Activated CD8-positive, alpha-beta T cell treated with anti-CD3 and anti-CD28 coated beads for 36 hours (primary cell): ENCODE measurements at regions of chr6 and their contacts with region 1.

Region 1: GRCh38 chr6:42928986-42929820 is at the start of gene CNPY3:
- DNase-seq: peak; percentile 98
- ATAC-seq: peak; percentile 82
- H3K4me3 Mint-ChIP-seq: peak within 1 kb of the TSS; percentile 95
- H3K27ac Mint-ChIP-seq: peak within 1 kb of the TSS; percentile 97
- H3K4me1 Mint-ChIP-seq: peaks cover 32% of the 10 kb centered on the region
- H3K27me3 Mint-ChIP-seq: no peaks in the 10 kb centered on the region
- CTCF ChIP-seq: no peak
- total RNA-seq, gene CNPY3: 46.2 to 46.8 TPM

Region 2: DNA sequence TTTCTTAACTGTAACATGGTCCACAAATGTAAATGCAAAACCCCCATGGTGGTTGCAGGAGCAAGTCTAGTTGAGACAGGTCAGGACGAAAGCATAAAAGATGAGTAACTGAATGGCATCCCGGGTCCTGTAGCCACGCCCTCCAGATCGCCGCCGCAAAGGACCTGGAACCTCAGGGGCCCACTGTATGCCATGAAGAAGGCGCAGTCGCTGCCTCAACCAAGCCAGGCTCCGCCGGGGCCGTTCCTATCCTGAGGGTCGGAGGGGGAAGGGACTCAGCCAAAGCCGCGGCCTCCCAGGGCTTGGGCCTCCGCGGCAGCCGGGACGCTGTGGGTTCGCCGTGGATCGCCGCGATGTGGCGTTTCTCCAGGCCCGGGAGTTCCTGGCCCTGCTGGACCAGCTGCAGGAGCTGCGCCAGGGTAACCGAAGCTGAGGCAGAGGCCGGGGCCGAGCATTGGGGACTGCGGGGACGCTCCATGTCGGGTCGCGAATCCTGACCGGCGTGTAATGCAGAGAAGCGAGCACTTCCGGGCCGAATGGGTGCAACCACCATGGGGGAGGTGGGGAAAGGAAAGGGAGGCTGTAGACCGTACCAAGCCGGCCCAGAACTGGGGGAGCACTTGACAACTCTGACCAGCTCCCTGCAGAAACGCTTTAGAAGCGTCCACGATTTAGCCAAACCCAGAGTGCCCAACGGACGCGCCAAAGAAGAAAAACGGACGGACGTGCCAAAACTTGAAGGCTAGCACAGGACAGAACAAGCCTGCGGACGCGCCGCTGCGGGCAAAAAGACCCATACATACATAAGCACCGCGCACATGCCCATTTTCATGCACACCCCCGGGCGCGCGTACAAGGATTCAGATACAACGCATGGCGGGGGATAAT is 38.6 kb before region 1 on chr6:
- CTCF ChIA-PET with region 1: interaction called, 3 read pairs
- POLR2A ChIA-PET with region 1: interaction called, 10 read pairs
- intact Hi-C with region 1: no loop called
- DNase-seq: peak; percentile 96
- ATAC-seq: peak; percentile 93
- H3K4me3 Mint-ChIP-seq: peak overlapping the region; percentile 79
- H3K27ac Mint-ChIP-seq: peak overlapping the region; percentile 92
- H3K4me1 Mint-ChIP-seq: peaks cover 28% of the 10 kb centered on the region
- H3K27me3 Mint-ChIP-seq: no peaks in the 10 kb centered on the region
- CTCF ChIP-seq: no peak

Region 3: GRCh38 chr6:42901536-42901957 is 27.7 kb before region 1 on chr6:
- CTCF ChIA-PET with region 1: interaction called, 16 read pairs
- POLR2A ChIA-PET with region 1: interaction called, 4 read pairs
- intact Hi-C with region 1: no loop called
- DNase-seq: peak; percentile 79
- ATAC-seq: peak; percentile 100
- H3K4me3 Mint-ChIP-seq: peak overlapping the region; percentile 41
- H3K27ac Mint-ChIP-seq: peak overlapping the region; percentile 13
- H3K4me1 Mint-ChIP-seq: peaks cover 14% of the 10 kb centered on the region
- H3K27me3 Mint-ChIP-seq: no peaks in the 10 kb centered on the region
- CTCF ChIP-seq: peak; percentile 86

Region 4: DNA sequence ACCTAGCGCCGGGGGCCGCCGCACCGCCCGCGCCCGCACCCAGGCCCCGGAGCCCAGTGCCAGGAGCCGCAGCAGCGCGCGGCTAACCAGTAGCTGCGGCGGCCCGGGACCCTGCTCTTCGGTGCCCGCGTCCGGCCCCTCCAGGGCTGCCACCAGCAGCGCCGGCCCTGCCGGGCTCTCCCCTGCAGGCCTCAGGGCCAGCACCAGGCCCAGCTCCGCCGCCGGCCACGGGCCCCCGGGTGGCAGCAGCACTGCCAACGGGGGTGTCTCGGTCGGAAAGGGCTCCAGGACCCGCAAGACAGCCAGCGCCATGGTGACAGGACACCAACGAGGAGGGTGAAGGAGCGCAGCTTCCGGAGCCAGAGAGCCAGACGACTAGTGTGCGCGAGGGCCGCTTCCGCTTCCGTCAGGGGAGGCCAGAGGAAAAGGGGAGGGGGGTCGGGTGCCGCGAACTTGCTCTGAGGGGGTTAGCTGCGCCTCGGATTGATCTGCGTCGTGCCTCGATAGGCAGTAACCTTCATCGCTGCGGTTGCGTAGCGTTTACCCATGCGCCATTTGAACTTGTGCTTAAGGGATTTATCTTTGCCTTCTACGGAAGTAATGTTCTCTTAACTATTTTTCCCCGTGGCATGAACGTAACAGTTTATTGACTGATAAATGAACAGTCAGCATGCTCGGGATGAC is 49.8 kb after region 1 on chr6 and contains the start of gene PEX6:
- CTCF ChIA-PET with region 1: interaction called, 10 read pairs
- POLR2A ChIA-PET with region 1: interaction called, 38 read pairs
- intact Hi-C with region 1: loop called (anchors 1 kb)
- DNase-seq: peak; percentile 94
- ATAC-seq: peak; percentile 92
- H3K4me3 Mint-ChIP-seq: peak within 1 kb of the TSS; percentile 88
- H3K27ac Mint-ChIP-seq: peak within 1 kb of the TSS; percentile 95
- H3K4me1 Mint-ChIP-seq: peaks cover 45% of the 10 kb centered on the region
- H3K27me3 Mint-ChIP-seq: no peaks in the 10 kb centered on the region
- CTCF ChIP-seq: no peak
- total RNA-seq, gene PEX6: 7.3 to 9.0 TPM

Region 5: DNA sequence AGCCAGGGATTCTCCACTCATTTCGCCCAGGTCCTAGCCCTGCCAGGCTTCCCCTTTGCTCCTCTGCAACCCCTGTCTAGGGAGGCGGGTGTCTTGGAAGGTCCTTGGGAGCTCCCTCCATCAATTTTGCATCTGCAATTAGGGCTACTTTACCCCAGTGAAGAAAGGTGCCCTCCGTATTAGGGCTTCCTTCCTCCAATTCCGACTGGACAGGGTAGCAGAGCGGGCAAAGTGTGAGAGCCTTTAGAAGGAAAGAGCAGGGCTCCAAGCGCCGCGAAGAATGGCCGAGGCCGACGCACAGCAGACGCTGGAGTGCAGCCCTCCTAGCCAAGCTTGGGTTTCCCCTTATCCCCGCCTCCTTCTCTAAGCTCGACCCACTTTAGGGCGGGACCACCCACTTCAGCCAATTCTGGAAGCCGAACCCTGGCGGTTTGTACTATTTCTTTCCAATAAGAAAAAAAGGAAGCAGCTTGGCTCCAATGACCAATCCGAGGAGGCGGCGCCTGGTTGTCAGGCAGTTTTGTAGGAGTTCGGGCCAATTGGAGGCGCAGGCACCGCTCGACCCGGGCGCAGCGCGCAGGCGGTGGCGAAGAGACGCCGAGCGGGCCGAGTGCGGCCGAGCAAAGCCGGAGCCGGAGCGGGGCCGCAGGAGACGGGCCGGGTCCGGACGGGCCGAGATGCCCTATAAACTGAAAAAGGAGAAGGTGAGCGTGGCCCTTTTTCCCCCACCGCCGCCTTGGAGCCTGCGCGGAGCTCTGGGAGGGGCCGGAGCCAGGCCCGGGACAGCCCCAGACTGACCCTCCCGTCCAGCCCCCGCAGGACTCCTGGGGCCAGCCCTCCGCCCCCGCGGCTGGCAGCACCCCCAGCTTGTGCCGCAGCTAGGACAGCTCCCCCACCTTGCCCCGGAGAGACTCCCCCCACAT is 55.1 kb after region 1 on chr6 and contains the start of gene PPP2R5D:
- CTCF ChIA-PET with region 1: interaction called, 10 read pairs
- POLR2A ChIA-PET with region 1: interaction called, 38 read pairs
- intact Hi-C with region 1: loop called (anchors 1 kb)
- DNase-seq: peak; percentile 99
- ATAC-seq: peak; percentile 94
- H3K4me3 Mint-ChIP-seq: peak within 1 kb of the TSS; percentile 88
- H3K27ac Mint-ChIP-seq: peak within 1 kb of the TSS; percentile 84
- H3K4me1 Mint-ChIP-seq: peaks cover 55% of the 10 kb centered on the region
- H3K27me3 Mint-ChIP-seq: no peaks in the 10 kb centered on the region
- CTCF ChIP-seq: no peak
- total RNA-seq, gene PPP2R5D: 41.6 to 47.5 TPM

Region 6: DNA sequence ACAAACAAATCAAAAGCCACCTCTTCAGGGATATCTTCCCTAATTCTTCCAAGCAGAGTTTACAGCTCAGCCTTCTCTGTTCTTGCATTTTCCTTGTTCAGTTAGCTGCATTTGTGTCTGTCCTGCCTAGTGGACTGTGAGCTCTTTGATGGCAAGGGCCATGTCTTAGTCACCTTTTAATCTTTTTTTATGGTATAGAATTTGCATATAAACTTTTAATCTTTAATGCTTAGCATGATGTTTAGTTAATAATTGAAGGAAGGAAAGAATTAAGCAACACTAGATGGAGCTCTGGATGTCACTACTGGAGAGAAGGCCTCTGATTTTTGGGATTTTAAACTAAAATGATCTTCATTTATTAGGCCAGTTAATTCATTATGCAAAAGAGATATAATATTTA is 67.3 kb after region 1 on chr6:
- CTCF ChIA-PET with region 1: no interaction called
- POLR2A ChIA-PET with region 1: no interaction called
- intact Hi-C with region 1: no loop called
- DNase-seq: no peak
- ATAC-seq: no peak
- H3K4me3 Mint-ChIP-seq: no peak overlapping the region
- H3K27ac Mint-ChIP-seq: no peak overlapping the region
- H3K4me1 Mint-ChIP-seq: no peaks in the 10 kb centered on the region
- H3K27me3 Mint-ChIP-seq: no peaks in the 10 kb centered on the region
- CTCF ChIP-seq: no peak

Region 7: GRCh38 chr6:43013843-43014433 is 84.7 kb after region 1 on chr6 and contains the starts of genes KLHDC3 and MEA1:
- CTCF ChIA-PET with region 1: interaction called, 5 read pairs
- POLR2A ChIA-PET with region 1: interaction called, 26 read pairs
- intact Hi-C with region 1: no loop called
- DNase-seq: peak; percentile 100
- ATAC-seq: peak; percentile 98
- H3K4me3 Mint-ChIP-seq: peak within 1 kb of the TSS; percentile 96
- H3K27ac Mint-ChIP-seq: peak within 1 kb of the TSS; percentile 93
- H3K4me1 Mint-ChIP-seq: peaks cover 52% of the 10 kb centered on the region
- H3K27me3 Mint-ChIP-seq: no peaks in the 10 kb centered on the region
- CTCF ChIP-seq: no peak
- total RNA-seq, gene KLHDC3: 58.6 to 64.0 TPM
- total RNA-seq, gene MEA1: 84.8 to 92.3 TPM

Region 8: GRCh38 chr6:43045371-43045930 is 116.2 kb after region 1 on chr6:
- CTCF ChIA-PET with region 1: no interaction called
- POLR2A ChIA-PET with region 1: no interaction called
- intact Hi-C with region 1: no loop called
- DNase-seq: no peak
- ATAC-seq: no peak
- H3K4me3 Mint-ChIP-seq: no peak overlapping the region
- H3K27ac Mint-ChIP-seq: no peak overlapping the region
- H3K4me1 Mint-ChIP-seq: peaks cover under 1% of the 10 kb centered on the region
- H3K27me3 Mint-ChIP-seq: no peaks in the 10 kb centered on the region
- CTCF ChIP-seq: no peak

Region 9: DNA sequence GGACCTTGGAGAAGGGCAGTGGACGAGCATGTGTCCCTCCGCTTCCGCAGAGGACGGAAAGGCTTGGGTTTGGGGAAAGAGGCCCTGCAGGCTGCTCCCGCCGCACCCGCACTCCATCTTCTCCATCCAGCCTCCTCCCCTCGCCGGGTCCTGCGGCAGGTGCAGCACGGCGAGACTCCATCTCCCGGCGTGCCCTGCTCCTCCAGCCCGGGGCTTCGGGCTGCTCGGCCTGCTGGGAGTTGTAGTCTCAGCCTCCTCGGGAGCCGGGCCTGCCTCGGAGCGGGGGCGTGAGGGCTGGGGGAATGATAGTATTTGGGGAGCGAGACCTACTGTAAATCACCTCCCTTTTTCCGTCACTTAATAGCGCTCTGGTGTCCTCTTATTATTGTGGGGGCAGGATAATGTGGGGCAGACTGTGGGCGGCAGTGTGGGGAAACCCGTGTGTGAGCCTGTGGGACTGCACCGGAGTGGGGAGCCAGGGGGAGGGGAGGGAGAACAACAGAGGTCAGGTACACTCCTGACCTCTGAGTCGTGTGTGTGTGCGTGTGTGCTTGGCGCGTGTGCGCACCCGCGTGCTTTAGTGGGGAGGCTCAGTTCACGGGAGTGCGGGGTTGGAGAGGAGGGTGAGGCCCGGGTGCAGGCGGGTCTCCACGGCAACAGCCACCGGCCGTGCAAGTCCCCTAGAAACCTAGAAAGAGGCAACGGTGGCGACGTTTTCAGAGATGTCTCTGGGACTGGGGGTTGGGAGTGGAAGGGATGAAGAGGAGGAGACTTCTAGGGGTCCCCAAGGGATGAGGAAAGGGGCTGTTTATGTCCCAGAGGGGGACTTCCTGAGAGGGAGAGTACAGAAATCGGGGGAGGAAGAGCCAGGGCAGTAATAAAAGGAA is 318.2 kb after region 1 on chr6:
- CTCF ChIA-PET with region 1: no interaction called
- POLR2A ChIA-PET with region 1: no interaction called
- intact Hi-C with region 1: no loop called
- DNase-seq: peak; percentile 90
- ATAC-seq: peak; percentile 98
- H3K4me3 Mint-ChIP-seq: peak overlapping the region; percentile 77
- H3K27ac Mint-ChIP-seq: peak overlapping the region; percentile 83
- H3K4me1 Mint-ChIP-seq: peaks cover 24% of the 10 kb centered on the region
- H3K27me3 Mint-ChIP-seq: peaks cover 18% of the 10 kb centered on the region
- CTCF ChIP-seq: no peak

Region 10: GRCh38 chr6:43297644-43298564 is 368.7 kb after region 1 on chr6 and contains the start of gene SLC22A7:
- CTCF ChIA-PET with region 1: no interaction called
- POLR2A ChIA-PET with region 1: no interaction called
- intact Hi-C with region 1: no loop called
- DNase-seq: no peak
- ATAC-seq: no peak
- H3K4me3 Mint-ChIP-seq: no peak within 1 kb of the TSS
- H3K27ac Mint-ChIP-seq: no peak within 1 kb of the TSS
- H3K4me1 Mint-ChIP-seq: no peaks in the 10 kb centered on the region
- H3K27me3 Mint-ChIP-seq: peaks cover 2% of the 10 kb centered on the region
- CTCF ChIP-seq: no peak
- total RNA-seq, gene SLC22A7: not detected